Cardiac septum (tissue), 1 donor: ENCODE measurements at regions of chr6 and their contacts with region 1.

Region 1: DNA sequence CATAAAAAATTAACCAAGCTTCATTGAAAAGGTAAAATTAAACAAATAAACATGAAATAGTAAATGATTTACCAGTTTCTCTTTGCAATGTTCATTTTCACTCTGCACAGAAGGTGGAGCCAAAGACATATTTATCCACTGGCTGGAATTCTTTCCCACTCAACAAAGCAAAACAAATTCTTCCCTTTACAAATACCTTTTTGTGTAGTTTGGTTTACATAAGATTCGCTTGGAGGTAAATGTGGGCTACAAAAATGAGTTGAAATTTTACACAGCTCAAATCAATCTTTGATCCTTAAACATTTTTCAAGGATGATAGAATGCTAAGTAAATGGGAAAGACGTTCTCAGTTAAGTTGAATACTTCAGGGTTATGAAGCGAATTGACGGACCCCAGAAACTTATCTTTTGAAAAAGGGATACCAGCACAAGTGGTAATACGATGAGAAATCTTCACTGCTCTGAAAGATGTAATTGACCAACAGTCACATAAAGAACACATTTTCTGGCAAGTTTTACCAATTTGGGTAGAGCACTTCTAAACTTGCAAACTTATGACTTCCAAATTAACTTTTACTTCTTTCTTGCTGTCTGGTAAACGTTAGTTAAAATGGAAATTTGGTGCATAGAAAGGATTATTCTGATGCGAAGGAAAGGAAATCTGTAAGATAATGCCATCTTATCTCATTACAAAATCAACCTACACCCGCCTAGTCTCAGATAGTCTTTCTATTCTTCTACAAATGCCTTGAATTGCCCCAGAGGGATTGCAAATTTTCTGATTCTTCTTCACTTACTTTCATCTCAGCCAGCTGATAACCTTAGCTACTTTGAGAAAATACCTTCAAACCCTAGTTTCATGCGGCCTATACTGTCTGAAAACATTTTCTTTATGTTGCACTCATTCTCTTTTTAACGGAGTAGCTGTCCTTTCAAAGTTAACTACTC is 4.7 kb upstream of the GJA1 start:
- DNase-seq: no peak

Region 2: DNA sequence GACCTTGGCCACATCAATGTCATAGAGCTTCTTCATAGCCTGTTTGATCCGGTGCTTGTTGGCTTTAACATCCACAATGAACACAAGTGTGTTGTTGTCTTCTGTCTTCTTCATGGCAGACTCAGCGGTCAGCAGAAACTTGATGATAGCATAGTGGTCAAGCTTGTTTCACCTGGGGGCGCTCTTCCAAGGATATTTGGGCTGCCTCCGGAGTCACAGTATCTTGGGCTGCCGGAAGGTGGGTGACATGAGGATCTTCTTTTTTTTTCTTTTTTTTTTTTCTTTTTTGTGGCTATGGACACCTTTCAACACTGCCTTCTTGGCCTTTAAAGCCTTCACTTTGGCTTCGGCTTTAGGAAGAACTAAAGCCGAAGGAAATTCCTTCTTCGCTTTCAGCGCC is 249.3 kb after region 1 on chr6:
- intact Hi-C with region 1: no loop called
- DNase-seq: no peak

Region 3: DNA sequence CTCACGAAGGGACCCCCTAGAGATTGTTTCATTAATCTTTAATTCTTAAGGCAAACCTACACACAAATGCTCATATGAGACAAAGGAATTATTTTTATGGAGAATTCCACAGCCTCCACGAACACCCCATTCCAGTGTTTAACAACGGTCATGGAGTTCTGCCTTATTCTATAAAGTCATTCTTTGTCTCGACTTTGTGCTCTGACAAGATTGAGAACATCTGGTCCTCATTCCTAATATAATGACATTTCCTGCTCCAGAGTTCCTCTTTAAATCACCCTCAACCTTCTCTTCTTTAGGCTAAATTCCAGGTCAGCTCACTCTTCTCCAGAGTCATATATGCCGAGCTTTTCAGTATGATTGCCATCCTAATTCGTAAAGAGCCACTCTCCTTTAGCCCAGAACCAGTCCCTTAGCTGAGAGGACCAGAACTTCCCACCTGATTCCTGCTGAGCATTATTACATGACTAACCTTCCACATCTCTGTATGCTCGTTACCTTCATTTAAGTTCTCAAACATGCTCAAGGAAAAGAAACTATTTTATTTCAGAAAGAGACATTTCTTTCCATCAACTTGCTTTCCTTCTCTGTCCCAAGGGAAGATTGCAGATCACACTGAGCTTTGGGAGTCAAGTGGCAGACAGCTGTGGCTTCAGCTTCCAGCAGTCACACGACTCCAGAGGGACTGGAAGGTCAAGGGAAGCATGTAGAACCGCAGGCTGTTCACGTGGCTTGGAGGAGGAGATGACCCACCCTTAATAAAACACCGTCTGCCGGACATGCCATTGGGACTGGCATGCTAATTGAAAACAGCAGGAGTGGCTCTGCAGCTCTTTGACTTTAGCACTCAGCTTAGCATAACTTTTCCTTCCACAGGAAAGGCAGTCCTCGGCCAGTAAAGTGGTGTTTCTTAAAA is 501.5 kb after region 1 on chr6:
- intact Hi-C with region 1: loop called (anchors 5 kb)
- DNase-seq: peak; percentile 74

Region 4: GRCh38 chr6:122008101-122008999 is 577.6 kb after region 1 on chr6:
- intact Hi-C with region 1: loop called (anchors 5 kb)
- DNase-seq: no peak

Region 5: GRCh38 chr6:122033539-122034181 is 602.9 kb after region 1 on chr6:
- intact Hi-C with region 1: loop called (anchors 1 kb)
- DNase-seq: no peak

Region 6: GRCh38 chr6:122184401-122184827 is 753.6 kb after region 1 on chr6:
- intact Hi-C with region 1: loop called (anchors 2 kb)
- DNase-seq: no peak

Region 7: GRCh38 chr6:122289762-122290539 is 859.2 kb after region 1 on chr6:
- intact Hi-C with region 1: loop called (anchors 10 kb)
- DNase-seq: no peak